Activated T-helper 1 cell treated with anti-CD3 and anti-CD28 coated beads, Interleukin-12 subunit alpha, Interleukin-12 subunit beta, Interleukin-2, Interleukin-4 antibody, amounts not matched to agents 30 ng/mL and 10 ng/mL and 1 ng/mL, durations not matched to agents 14 hours and 24 hours and 36 hours (primary cell): ENCODE measurements at regions of chr1 and their contacts with region 1.

Region 1: GRCh38 chr1:54052934-54053744 is at the starts of genes TCEANC2 and TMEM59:
- DNase-seq: peak; percentile 98
- H3K4me3 Mint-ChIP-seq: no peak within 1 kb of the TSS
- H3K27ac Mint-ChIP-seq: no peak within 1 kb of the TSS
- H3K4me1 Mint-ChIP-seq: peaks cover 27% of the 10 kb centered on the region
- H3K27me3 Mint-ChIP-seq: no peaks in the 10 kb centered on the region
- total RNA-seq, gene TCEANC2: 11.8 and 12.0 TPM in 2 replicates
- total RNA-seq, gene TMEM59: 119 and 133 TPM in 2 replicates

Region 2: DNA sequence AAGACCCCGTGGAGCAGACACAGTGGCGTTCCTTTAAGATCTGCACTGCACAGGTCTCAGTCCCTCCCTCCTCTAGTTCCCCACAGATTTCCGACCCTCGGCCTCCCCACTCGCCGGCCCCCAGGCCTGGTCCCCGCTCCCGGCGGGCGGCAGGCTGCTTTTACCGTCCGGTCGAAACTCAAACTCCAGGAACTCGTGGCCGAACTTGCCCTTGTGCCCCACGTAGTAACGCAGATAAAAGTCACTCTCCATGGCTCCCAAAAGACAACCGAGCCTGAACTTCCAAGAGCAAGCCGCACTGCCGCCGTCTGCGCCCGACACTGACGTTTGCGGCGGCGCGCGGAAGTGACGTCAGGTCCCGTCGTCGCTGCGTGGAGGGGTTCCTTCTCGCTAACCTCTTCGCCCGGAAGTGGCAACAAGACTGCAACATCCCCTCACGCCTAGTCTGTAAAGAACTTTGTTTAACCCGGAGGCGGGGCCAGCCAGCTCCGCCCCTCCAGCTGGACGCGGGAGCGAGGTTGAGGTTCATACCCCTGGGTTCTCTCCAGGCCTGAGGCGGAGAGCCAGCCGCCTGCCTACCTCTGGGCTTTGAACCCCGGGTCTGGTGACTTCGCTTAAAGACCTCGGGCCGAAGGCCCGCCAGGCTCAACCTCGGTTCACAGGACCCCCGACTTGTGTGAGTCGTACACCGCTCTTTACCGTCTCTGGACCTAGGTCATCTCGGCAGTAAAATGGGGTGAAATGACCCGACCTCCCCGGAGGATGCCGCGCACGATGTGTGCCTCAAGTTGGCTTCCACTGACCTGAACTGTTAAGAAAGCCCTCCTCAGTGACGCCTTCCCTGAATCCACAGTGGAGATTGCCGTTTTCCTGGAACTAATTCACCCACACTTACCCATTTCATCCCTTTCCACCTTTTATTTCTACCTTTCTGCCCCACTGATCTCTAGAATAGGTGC is 814.7 kb before region 1 on chr1 and contains the start of gene MAGOH:
- intact Hi-C with region 1: loop called (anchors 1 kb)
- DNase-seq: peak; percentile 93
- H3K4me3 Mint-ChIP-seq: peak within 1 kb of the TSS; percentile 97
- H3K27ac Mint-ChIP-seq: peak within 1 kb of the TSS; percentile 98
- H3K4me1 Mint-ChIP-seq: peaks cover 28% of the 10 kb centered on the region
- H3K27me3 Mint-ChIP-seq: no peaks in the 10 kb centered on the region
- total RNA-seq, gene MAGOH: 104 TPM in 2 replicates

Region 3: GRCh38 chr1:53526451-53527101 is 526.6 kb before region 1 on chr1:
- intact Hi-C with region 1: no loop called
- DNase-seq: no peak
- H3K4me3 Mint-ChIP-seq: no peak overlapping the region
- H3K27ac Mint-ChIP-seq: no peak overlapping the region
- H3K4me1 Mint-ChIP-seq: no peaks in the 10 kb centered on the region
- H3K27me3 Mint-ChIP-seq: peaks cover 2% of the 10 kb centered on the region

Region 4: DNA sequence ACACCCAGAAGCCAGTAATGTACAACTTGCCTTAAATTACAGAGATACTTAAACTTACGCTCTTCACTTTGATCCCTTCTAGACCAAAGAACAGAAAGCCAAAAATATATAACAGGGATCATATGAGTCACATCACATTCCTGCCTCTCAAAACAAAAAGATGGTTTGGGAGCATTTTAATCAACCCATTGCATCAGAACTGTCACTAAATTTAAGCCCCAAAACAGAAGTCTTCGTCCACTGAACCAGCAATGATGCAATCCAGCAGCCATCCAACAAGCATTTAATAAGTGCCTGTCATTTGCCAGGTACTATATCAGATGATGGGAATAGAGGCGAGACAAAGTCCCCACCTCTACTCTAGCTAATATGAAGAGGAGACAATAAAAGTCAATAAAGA is 271.5 kb before region 1 on chr1:
- intact Hi-C with region 1: no loop called
- DNase-seq: no peak
- H3K4me3 Mint-ChIP-seq: no peak overlapping the region
- H3K27ac Mint-ChIP-seq: no peak overlapping the region
- H3K4me1 Mint-ChIP-seq: peaks cover 31% of the 10 kb centered on the region
- H3K27me3 Mint-ChIP-seq: no peaks in the 10 kb centered on the region

Region 5: GRCh38 chr1:53847980-53848379 is 205.2 kb before region 1 on chr1:
- intact Hi-C with region 1: no loop called
- DNase-seq: no peak
- H3K4me3 Mint-ChIP-seq: no peak overlapping the region
- H3K27ac Mint-ChIP-seq: no peak overlapping the region
- H3K4me1 Mint-ChIP-seq: no peaks in the 10 kb centered on the region
- H3K27me3 Mint-ChIP-seq: peaks cover 3% of the 10 kb centered on the region

Region 6: DNA sequence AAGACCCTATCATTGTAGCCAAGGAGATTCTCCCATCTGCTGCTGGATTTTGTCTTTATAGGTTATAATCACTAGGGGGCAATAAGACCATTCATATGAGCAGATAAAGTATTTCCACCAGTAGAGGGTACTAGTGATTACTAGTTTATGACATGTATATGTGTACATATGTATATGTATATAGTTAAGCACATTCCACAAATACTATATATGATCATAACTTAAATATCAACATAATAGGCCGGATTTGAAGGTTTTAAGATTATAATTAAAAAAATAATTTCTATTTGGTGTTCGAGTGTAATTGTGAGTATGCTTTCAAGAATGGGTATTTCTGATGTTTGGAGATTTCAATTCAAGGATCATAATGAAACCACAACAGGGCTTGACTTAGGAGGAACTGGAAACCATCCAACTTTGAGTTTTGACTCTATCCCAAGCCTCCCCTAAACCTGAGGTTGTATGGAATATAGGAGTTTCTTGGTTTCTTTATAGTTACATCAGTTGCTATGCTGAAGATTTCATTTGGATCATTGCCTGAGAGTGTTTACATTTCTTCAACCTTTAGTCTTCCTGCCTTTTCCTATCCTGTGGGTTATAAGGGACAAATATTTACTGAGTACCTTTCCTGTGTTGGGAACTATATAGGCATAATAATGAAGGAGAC is 17.2 kb after region 1 on chr1:
- intact Hi-C with region 1: loop called (anchors 1 kb)
- DNase-seq: no peak
- H3K4me3 Mint-ChIP-seq: no peak overlapping the region
- H3K27ac Mint-ChIP-seq: no peak overlapping the region
- H3K4me1 Mint-ChIP-seq: no peaks in the 10 kb centered on the region
- H3K27me3 Mint-ChIP-seq: no peaks in the 10 kb centered on the region

Region 7: DNA sequence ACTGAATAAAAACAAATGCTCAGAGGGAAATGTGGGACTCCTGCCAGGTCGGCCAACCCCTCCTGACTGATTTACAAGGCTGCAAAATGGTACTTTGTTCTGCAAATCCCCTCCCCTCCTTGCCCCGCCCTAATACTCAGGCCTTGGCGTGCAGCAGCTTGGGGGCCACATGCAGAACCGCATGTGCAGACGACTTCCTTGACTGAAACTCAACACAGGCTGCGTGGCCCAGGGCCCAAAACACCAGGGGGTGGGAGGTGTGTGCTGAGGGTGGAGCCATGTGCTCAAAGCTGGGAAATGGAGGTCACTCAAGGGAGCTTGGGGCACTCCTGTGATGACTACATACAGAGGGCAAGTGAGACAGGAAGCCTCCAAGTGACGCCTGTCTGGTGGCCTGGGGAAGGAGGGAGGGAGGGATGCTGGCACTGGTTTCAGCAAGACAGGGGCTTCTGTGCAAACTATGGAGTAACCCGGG is 234.1 kb after region 1 on chr1:
- intact Hi-C with region 1: loop called (anchors 2 kb)
- DNase-seq: peak; percentile 79
- H3K4me3 Mint-ChIP-seq: peak overlapping the region; percentile 81
- H3K27ac Mint-ChIP-seq: peak overlapping the region; percentile 98
- H3K4me1 Mint-ChIP-seq: peaks cover 89% of the 10 kb centered on the region
- H3K27me3 Mint-ChIP-seq: no peaks in the 10 kb centered on the region

Region 8: DNA sequence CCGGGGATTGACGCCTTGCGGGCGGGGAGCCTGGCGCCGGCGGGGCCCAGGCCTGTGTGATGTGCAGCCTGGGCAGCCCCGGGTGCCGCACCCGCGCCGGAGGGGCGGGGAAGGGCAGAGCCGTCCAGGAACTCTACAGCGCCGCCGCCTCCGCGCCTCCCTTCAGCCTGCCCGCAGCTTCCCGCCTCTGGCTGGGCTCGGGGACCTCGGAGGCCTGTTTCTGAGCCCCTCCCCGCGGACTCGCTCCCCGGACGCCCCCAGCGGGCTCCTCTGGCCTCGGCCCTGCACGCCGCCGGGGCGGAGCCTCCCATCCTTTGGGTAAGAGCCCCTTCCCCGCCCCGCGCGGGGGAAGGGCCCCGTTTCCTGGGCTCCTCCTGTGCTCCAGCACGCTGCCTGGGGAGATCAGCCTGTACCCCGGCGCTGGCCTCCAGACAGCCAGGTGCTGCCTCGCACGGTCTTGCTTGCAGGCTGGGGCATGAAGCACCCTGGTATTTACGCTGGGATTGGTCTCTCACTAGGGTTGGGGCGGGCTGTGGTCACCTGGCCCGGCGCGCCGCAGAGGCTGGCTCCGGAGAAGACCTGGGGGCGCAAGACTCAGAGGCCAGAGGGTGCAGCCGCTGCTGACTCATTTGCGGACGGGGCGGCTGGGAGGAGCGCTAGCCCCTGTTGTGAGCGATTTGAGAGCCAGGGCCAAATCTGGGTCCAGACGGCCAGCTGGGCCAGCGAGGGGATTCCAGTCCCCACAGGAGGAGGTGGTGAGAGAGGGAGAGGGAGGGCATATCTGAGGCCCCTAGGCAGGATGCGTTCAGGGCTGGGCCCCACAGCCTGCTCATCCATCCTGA is 489.2 kb after region 1 on chr1:
- intact Hi-C with region 1: loop called (anchors 1 kb)
- DNase-seq: peak; percentile 55
- H3K4me3 Mint-ChIP-seq: peak overlapping the region; percentile 75
- H3K27ac Mint-ChIP-seq: peak overlapping the region; percentile 49
- H3K4me1 Mint-ChIP-seq: no peaks in the 10 kb centered on the region
- H3K27me3 Mint-ChIP-seq: peaks cover 9% of the 10 kb centered on the region

Region 9: GRCh38 chr1:54886724-54887664 is 833.9 kb after region 1 on chr1 and contains the start of gene DHCR24:
- intact Hi-C with region 1: loop called (anchors 1 kb)
- DNase-seq: peak; percentile 85
- H3K4me3 Mint-ChIP-seq: peak within 1 kb of the TSS; percentile 96
- H3K27ac Mint-ChIP-seq: peak within 1 kb of the TSS; percentile 87
- H3K4me1 Mint-ChIP-seq: peaks cover 56% of the 10 kb centered on the region
- H3K27me3 Mint-ChIP-seq: peaks cover 10% of the 10 kb centered on the region
- total RNA-seq, gene DHCR24: 206 and 211 TPM in 2 replicates